ENCODE measurements at regions of chr19 and their contacts with region 1.

Region 1: GRCh38 chr19:13262450-13262849 is 112.2 kb downstream of the IER2 start:
- DNase-seq: no peak
- H3K4me3 Mint-ChIP-seq: no peak overlapping the region
- H3K27ac Mint-ChIP-seq: no peak overlapping the region
- H3K4me1 Mint-ChIP-seq: peaks cover 16% of the 10 kb centered on the region
- H3K27me3 Mint-ChIP-seq: peaks cover 15% of the 10 kb centered on the region

Region 2: DNA sequence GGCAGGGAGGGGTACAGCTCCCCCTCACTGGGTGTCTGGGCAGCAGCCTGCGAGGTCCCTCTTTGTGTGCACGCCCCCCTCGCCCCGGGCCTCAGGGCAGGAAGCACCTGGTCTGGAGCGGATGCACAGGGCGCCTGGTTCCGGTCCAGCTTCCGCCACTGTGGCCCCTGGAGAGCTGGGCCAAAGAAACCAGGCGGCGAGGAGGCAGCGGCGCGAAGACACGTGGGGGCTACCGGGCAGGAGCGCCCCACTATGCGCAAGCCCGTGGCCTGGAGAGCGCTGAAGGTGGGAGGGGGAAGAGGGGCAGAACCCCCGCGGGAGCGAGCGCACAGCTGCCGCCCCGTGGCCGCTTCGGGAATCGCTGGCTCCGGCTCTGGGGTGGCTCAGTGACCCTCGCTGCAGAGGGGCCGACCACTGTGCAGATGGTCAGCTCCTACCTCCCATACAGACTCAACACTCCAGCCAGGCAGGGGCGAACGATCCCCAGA is 158.0 kb before region 1 on chr19:
- intact Hi-C with region 1: loop called (anchors 5 kb)
- DNase-seq: peak; percentile 62
- H3K4me3 Mint-ChIP-seq: peak overlapping the region; percentile 92
- H3K27ac Mint-ChIP-seq: peak overlapping the region; percentile 95
- H3K4me1 Mint-ChIP-seq: peaks cover 24% of the 10 kb centered on the region
- H3K27me3 Mint-ChIP-seq: no peaks in the 10 kb centered on the region

Region 3: DNA sequence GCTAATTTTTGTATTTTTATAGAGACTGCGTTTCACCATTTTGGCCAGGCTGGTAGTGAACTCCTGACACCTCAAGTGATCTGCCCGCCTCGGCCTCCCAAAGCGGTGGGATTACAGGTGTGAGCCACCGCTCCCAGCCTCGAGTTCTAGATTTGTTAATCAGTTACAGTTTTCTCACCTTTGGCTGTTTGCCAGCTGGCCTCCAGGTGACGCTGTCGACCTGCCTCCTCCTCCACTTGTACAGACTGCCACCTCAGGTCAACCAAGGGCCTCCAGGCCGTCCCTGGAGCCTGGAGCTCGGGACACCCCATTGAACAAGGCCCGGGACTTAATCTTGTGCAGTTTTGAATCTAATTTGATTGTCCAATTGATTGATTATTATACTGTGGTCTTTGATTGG is 66.8 kb before region 1 on chr19:
- intact Hi-C with region 1: loop called (anchors 1 kb)
- DNase-seq: peak; percentile 33
- H3K4me3 Mint-ChIP-seq: no peak overlapping the region
- H3K27ac Mint-ChIP-seq: no peak overlapping the region
- H3K4me1 Mint-ChIP-seq: peaks cover 10% of the 10 kb centered on the region
- H3K27me3 Mint-ChIP-seq: no peaks in the 10 kb centered on the region

Region 4: GRCh38 chr19:13212759-13213330 is 49.6 kb before region 1 on chr19:
- intact Hi-C with region 1: loop called (anchors 1 kb)
- DNase-seq: peak; percentile 55
- H3K4me3 Mint-ChIP-seq: no peak overlapping the region
- H3K27ac Mint-ChIP-seq: no peak overlapping the region
- H3K4me1 Mint-ChIP-seq: peaks cover 13% of the 10 kb centered on the region
- H3K27me3 Mint-ChIP-seq: no peaks in the 10 kb centered on the region

Region 5: GRCh38 chr19:13398780-13399726 is 136.6 kb after region 1 on chr19:
- intact Hi-C with region 1: no loop called
- DNase-seq: no peak
- H3K4me3 Mint-ChIP-seq: no peak overlapping the region
- H3K27ac Mint-ChIP-seq: no peak overlapping the region
- H3K4me1 Mint-ChIP-seq: no peaks in the 10 kb centered on the region
- H3K27me3 Mint-ChIP-seq: peaks cover 1% of the 10 kb centered on the region

Region 6: GRCh38 chr19:13633109-13633508 is 370.7 kb after region 1 on chr19:
- intact Hi-C with region 1: no loop called
- DNase-seq: no peak
- H3K4me3 Mint-ChIP-seq: no peak overlapping the region
- H3K27ac Mint-ChIP-seq: no peak overlapping the region
- H3K4me1 Mint-ChIP-seq: no peaks in the 10 kb centered on the region
- H3K27me3 Mint-ChIP-seq: no peaks in the 10 kb centered on the region